Sigmoid colon (tissue), 7 donors: ENCODE measurements at regions of chr12 and their contacts with region 1.

Region 1: DNA sequence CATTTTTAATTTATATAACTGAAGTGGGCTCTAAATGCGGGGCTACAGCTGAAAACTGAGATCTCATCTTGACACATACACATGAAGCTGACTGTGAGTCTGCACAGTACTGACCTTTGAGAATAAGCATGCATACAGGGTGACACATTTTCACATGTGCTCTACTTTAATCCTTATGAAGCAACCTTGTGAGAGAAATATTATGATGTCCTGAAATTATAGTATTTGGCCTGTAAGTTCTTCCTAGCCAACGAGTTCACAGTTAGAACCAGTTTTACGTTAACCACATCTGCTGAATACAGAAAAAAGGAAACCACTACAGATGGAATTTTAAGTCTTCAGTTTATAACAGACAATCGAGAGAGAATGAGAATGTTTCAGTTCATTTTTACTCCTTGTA is 70.3 kb downstream of the SPPL3 start:
- DNase-seq: no peak
- H3K4me3 ChIP-seq: no peak overlapping the region
- H3K27ac ChIP-seq: peak overlapping the region in 3 of 4 donors; percentile 17 to 71 (median 67)
- H3K4me1 ChIP-seq: peaks cover 0 to 84% (median 66%) of the 10 kb centered on the region in 4 donors
- H3K27me3 ChIP-seq: no peaks in the 10 kb centered on the region
- CTCF ChIP-seq: no peak
- EP300 ChIP-seq: peak in 1 of 4 donors; percentile 61
- POLR2A ChIP-seq: no peak

Region 2: GRCh38 chr12:120710031-120710804 is 123.6 kb before region 1 on chr12 and contains the start of gene UNC119B:
- intact Hi-C with region 1: no loop called
- DNase-seq: peak; percentile 73
- H3K4me3 ChIP-seq: peak within 1 kb of the TSS; percentile 68 to 97 (median 90)
- H3K27ac ChIP-seq: peak within 1 kb of the TSS; percentile 88 to 95 (median 92)
- H3K4me1 ChIP-seq: peaks cover 0 to 26% (median 20%) of the 10 kb centered on the region in 4 donors
- H3K27me3 ChIP-seq: no peaks in the 10 kb centered on the region
- CTCF ChIP-seq: no peak
- EP300 ChIP-seq: no peak
- POLR2A ChIP-seq: no peak
- total RNA-seq, gene UNC119B: 11.1 to 18.3 (median 18.1) TPM

Region 3: DNA sequence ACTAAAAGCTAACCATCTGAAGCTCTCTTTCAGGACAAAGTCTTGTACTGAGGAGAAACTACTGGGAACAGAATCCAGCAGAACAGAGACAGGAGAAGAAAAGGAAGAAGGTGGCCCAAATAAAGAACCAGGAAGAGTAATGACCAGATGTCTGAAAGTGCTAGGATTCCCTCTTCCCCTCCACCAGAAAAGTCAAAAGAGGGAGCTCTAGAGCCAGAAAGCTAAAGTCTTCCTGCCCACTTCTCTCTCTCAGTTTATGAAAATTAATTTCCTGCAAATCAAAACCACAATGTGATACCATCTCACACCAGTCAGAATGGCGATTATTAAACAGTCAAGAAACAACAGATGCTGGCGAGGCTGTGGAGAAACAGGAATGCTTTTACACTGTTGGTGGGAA is 23.1 kb after region 1 on chr12:
- intact Hi-C with region 1: loop called (anchors 1 kb)
- DNase-seq: no peak
- H3K4me3 ChIP-seq: no peak overlapping the region
- H3K27ac ChIP-seq: no peak overlapping the region
- H3K4me1 ChIP-seq: peaks cover 0 to 35% (median 27%) of the 10 kb centered on the region in 4 donors
- H3K27me3 ChIP-seq: no peaks in the 10 kb centered on the region
- CTCF ChIP-seq: no peak
- EP300 ChIP-seq: no peak
- POLR2A ChIP-seq: no peak

Region 4: GRCh38 chr12:120892265-120892664 is 58.4 kb after region 1 on chr12:
- intact Hi-C with region 1: no loop called
- DNase-seq: no peak
- H3K4me3 ChIP-seq: no peak overlapping the region
- H3K27ac ChIP-seq: no peak overlapping the region
- H3K4me1 ChIP-seq: peaks cover 0 to 36% (median 23%) of the 10 kb centered on the region in 4 donors
- H3K27me3 ChIP-seq: no peaks in the 10 kb centered on the region
- CTCF ChIP-seq: no peak
- EP300 ChIP-seq: no peak
- POLR2A ChIP-seq: no peak